Dorsolateral prefrontal cortex (tissue), 120 donors: ENCODE measurements at regions of chr2 and their contacts with region 1.

Region 1: GRCh38 chr2:36785179-36785795 is 88.8 kb downstream of the VIT start:
- DNase-seq: peak in 6 of 10 donors; percentile 18 to 73 (median 38)
- H3K4me3 ChIP-seq: no peak overlapping the region
- H3K27ac ChIP-seq: no peak overlapping the region
- H3K27me3 ChIP-seq: no peaks in the 10 kb centered on the region
- CTCF ChIP-seq: peak; percentile 66 to 96 (median 86)

Region 2: DNA sequence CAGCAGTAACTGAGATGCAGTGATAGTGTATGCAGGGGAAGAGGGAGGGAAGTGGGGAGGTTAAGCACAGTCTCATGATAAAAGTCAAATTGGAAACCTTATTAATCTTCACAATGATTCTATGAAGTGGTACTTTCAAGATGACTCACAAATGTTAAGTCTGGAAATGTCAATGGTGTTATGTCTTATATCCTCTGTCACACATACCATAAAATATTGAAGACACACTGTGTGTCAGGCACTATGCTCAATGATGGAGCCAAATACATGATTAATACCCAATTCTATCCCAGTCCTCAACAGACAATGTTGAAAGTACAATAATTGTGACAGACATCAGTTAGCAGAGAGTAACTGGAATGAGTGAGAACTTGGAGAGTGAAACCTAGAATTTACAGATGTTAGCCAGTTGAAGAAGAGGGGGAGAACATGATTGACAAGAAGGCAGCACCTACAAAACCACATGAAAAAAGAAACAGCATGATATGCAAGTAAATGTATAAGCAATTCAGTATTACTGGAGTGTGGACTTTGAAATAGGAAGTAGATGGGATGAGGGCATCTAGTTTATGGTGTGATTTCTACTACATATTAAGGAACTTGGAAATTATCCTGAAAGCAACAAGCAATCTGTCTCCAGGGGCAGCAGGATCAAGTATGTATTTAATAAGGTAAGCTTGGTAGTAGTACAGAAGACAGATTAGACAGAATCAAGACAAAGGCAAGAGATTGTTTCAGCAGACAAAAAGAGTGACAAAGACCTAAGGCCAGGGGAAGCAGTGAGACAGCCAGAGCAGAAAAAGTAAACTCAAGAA is 73.5 kb after region 1 on chr2:
- intact Hi-C with region 1: loop called in 1 of 2 experiments (anchors 5 kb)
- DNase-seq: no peak
- H3K4me3 ChIP-seq: no peak overlapping the region
- H3K27ac ChIP-seq: peak overlapping the region in 9 of 59 donors; percentile 8 to 50 (median 38)
- H3K27me3 ChIP-seq: no peaks in the 10 kb centered on the region
- CTCF ChIP-seq: no peak

Region 3: DNA sequence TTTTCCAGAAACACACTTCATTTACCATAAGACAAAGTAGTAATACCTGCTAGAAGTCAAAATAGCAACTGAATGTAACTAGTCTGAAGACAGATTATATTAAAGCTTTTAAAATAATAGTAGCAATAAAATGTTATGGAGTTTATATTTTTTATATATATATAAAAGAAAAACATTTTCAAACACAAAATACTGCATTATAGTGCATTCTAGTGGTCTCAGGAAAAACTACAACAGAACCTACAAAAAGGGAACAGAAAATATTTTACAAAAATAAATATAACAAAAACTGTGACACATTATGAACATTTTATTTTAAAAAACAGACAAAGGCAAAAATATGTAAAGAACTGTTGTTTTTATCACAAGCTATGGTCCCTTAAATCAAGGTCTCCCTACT is 133.0 kb after region 1 on chr2:
- intact Hi-C with region 1: loop called in 1 of 2 experiments (anchors 10 kb)
- DNase-seq: no peak
- H3K4me3 ChIP-seq: no peak overlapping the region
- H3K27ac ChIP-seq: no peak overlapping the region
- H3K27me3 ChIP-seq: no peaks in the 10 kb centered on the region
- CTCF ChIP-seq: peak in 54 of 56 donors; percentile 12 to 76 (median 52)

Region 4: GRCh38 chr2:37005118-37005868 is 220.0 kb after region 1 on chr2:
- intact Hi-C with region 1: loop called (anchors 2 to 10 kb)
- DNase-seq: no peak
- H3K4me3 ChIP-seq: no peak overlapping the region
- H3K27ac ChIP-seq: no peak overlapping the region
- H3K27me3 ChIP-seq: no peaks in the 10 kb centered on the region
- CTCF ChIP-seq: peak in 53 of 56 donors; percentile 16 to 69 (median 48)